ENCODE measurements at regions of chr6 and their contacts with region 1.

Region 1: DNA sequence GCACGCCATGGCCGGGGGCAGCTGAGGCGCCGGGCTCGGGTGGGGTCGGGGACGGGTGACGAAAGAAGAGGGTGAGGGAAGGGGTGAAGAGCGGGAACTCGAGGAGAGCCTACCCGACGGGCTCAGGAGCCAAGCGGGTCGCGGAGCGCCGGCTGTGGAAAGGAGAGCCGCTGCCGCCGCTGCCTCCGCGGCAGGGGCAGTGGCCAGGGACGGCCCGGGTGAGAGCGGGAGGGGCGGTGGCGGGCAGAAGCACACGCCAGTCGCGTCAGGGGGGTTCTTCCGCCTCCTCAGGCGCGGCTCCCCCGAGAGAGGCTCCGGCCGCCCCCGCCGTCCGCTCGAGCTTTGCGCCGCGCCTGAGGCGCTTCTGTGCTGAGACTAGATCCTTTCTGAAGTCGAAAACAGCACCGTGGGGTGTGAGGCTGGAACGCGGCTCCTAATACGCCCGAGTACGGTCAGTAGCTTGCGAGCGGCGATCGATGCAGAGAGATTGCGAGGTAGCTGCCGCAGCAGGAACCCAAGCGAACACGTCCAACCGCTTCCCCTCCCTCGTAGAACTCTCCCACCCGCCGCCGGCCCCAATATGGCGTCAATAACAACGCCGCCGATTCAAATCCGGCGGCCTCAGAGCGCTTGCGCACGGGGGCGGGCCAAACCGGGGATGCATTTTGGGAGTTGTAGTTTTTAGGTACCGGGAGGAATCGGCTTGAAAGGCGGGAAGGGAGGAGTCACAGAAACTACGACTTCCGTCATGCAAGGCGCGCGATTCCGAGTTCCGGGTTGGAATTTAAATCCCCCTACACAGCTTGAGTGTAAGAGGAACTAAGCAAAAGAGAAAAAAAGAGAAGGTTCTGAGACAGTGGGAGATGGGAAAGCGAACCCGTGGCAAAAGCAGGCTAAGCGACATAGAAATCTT is at the start of gene AKIRIN2:
- DNase-seq: peak; percentile 100
- H3K4me3 ChIP-seq: peak within 1 kb of the TSS; percentile 94
- H3K27ac ChIP-seq: peak within 1 kb of the TSS; percentile 89
- H3K4me1 ChIP-seq: peaks cover 50% of the 10 kb centered on the region
- CTCF ChIP-seq: no peak
- total RNA-seq, gene AKIRIN2: 70.3 and 70.4 TPM in 2 replicates

Region 2: DNA sequence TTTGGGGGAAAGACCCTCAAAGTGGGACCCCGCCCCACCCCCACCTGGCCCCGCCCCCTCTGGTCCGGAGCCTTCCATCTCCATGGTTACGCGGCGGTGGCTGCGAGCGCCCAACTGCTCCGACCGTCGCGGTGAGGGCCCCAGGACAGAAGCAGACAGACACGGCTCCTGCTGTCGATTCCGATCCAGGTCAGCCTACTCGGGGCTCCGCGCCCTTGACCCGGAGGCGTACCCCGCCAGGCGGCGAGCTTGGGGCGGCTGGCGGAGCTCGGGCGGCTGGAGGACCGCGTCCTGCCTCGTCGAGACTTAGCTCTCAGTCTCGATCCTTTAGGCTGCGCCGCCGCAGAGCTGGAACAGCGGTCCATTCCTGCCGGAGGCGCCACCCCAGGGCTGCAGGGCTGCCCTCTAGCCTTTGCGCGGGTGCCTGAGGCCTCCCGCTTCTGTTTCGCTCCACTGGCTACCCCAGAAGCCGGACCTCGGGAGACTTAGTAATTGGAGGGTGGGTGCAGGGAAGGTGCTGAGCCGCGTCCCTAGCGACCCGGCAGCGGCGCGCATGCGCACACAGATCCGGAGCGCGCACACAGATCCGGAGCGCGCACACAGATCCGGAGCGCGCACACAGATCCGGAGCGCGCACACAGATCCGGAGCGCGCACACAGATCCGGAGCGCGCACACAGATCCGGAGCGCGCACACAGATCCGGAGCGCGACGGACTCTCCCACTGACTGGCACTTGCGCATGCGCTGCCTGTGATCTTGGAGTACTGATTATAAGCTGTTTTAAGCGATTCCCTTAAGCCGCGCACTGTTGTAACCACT is 293.8 kb before region 1 on chr6 and contains the start of gene CFAP206:
- CTCF ChIA-PET with region 1: no interaction called
- POLR2A ChIA-PET with region 1: interaction called, 3 read pairs
- intact Hi-C with region 1: loop called (anchors 5 kb)
- DNase-seq: peak; percentile 90
- H3K4me3 ChIP-seq: peak within 1 kb of the TSS; percentile 85
- H3K27ac ChIP-seq: peak within 1 kb of the TSS; percentile 50
- H3K4me1 ChIP-seq: peaks cover 5% of the 10 kb centered on the region
- CTCF ChIP-seq: 0 out of 2 replicates have a peak, but pooled peaks have one; percentile 36
- total RNA-seq, gene CFAP206: 0.19 TPM in 1 of 2 replicates, not detected in the other

Region 3: DNA sequence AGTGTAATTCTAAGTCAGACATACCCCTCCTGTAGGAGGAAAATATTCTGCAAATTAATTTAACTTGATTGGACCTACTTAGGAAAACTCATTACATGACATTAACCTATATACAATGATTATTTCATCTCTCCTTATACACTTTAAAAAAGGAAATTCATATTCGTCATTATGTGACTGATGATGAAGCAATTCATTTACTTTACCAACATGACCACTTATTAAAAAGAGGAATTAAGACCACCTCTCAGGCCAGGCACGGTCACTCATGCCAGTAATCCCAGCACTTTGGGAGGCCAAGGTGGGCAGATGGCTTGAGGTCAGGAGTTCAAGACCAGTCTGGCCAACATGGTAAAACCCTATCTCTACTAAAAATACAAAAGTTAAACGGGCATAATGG is 11.5 kb before region 1 on chr6:
- CTCF ChIA-PET with region 1: no interaction called
- POLR2A ChIA-PET with region 1: interaction called, 48 read pairs
- intact Hi-C with region 1: no loop called
- DNase-seq: no peak
- H3K4me3 ChIP-seq: no peak overlapping the region
- H3K27ac ChIP-seq: no peak overlapping the region
- H3K4me1 ChIP-seq: peaks cover 39% of the 10 kb centered on the region
- CTCF ChIP-seq: no peak

Region 4: DNA sequence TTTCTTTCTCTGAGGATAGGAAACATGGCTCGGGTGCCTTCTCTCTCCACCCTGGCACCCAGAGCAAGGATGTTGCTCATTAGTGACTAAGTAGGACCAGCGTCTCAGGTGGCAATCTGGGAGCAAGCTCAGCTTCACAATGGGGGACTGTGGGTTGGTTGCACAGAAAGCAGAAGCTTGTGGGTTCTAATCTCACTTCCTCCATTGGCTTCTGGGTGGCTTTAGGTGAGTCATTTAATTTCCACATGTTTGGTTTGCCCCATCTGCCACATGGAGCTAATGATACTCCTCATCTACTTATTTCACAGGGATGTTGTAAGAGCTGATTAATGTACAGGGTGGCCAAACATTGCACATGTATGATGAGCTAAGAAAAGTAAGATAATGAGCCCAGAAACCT is 54.9 kb after region 1 on chr6:
- CTCF ChIA-PET with region 1: no interaction called
- POLR2A ChIA-PET with region 1: interaction called, 15 read pairs
- intact Hi-C with region 1: loop called (anchors 1 kb)
- DNase-seq: peak; percentile 94
- H3K4me3 ChIP-seq: peak overlapping the region; percentile 23
- H3K27ac ChIP-seq: peak overlapping the region; percentile 78
- H3K4me1 ChIP-seq: peaks cover 49% of the 10 kb centered on the region
- CTCF ChIP-seq: no peak

Region 5: DNA sequence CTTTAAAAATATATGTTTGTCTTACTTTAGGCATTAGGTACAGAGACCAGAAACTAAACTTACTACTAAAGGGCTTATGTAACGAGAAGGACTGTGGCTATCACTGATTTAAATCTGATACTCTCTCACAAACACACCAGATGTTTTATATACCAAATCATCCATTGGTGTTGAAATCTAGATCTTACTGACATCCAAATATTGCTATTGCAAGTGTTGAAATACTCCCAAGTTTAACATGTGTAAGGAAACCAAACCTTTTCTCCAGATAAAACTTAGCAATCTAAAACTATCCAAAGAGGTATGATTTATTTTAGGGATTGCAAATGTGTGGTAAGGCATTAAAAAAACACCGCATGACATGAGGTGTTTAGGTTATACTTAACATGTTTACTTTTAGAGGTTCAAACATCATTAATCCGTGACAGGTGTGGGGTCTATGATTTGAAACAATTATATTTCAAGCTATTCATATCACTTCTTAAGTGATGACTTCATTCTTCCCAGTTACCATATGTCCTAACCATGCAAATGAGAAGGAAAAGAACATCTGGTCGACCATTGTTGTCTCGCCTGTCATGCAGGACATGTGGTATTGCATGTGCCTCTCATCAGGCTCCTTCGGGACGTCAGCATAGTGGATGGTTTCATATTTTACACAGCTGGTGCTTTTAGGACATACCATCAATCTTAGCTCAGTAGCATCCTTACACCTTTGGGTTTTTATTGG is 177.4 kb after region 1 on chr6:
- CTCF ChIA-PET with region 1: no interaction called
- POLR2A ChIA-PET with region 1: interaction called, 5 read pairs
- intact Hi-C with region 1: loop called (anchors 2 kb)
- DNase-seq: peak; percentile 100
- H3K4me3 ChIP-seq: peak overlapping the region; percentile 11
- H3K27ac ChIP-seq: peak overlapping the region; percentile 99
- H3K4me1 ChIP-seq: peaks cover 78% of the 10 kb centered on the region
- CTCF ChIP-seq: no peak

Region 6: GRCh38 chr6:87914637-87915395 is 212.9 kb after region 1 on chr6:
- CTCF ChIA-PET with region 1: no interaction called
- POLR2A ChIA-PET with region 1: interaction called, 66 read pairs
- intact Hi-C with region 1: loop called (anchors 2 kb)
- DNase-seq: peak; percentile 58
- H3K4me3 ChIP-seq: no peak overlapping the region
- H3K27ac ChIP-seq: peak overlapping the region; percentile 99
- H3K4me1 ChIP-seq: peaks cover 95% of the 10 kb centered on the region
- CTCF ChIP-seq: no peak

Region 7: DNA sequence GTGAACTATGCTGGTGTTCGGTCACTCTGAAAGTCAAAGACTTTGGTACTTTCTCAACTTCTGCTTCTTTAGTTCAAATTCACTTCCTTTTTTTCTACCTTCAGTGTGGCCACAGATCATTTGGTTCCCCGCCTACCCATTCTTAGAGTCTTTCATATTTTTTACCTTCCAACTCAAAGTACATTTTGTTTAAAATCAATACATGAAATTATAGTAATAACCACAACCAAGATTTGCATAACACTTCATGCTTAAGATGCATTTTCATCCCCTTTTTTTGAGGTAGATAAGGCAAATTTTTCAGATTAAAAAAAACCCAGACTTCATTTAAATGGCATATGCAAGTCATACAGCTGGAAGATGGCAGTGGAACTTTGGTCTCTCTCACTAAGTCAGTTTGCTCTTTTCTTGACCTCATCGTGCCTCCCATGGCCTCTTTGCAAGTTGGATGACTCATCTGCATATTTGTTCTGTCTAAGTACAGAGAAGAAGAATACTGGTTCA is 476.1 kb after region 1 on chr6:
- CTCF ChIA-PET with region 1: no interaction called
- POLR2A ChIA-PET with region 1: no interaction called
- intact Hi-C with region 1: loop called (anchors 5 kb)
- DNase-seq: peak; percentile 91
- H3K4me3 ChIP-seq: peak overlapping the region; percentile 74
- H3K27ac ChIP-seq: peak overlapping the region; percentile 93
- H3K4me1 ChIP-seq: peaks cover 68% of the 10 kb centered on the region
- CTCF ChIP-seq: no peak

Measured in OCI-LY7 (cell line).